ENCODE measurements at regions of chr6 and their contacts with region 1.

Region 1: DNA sequence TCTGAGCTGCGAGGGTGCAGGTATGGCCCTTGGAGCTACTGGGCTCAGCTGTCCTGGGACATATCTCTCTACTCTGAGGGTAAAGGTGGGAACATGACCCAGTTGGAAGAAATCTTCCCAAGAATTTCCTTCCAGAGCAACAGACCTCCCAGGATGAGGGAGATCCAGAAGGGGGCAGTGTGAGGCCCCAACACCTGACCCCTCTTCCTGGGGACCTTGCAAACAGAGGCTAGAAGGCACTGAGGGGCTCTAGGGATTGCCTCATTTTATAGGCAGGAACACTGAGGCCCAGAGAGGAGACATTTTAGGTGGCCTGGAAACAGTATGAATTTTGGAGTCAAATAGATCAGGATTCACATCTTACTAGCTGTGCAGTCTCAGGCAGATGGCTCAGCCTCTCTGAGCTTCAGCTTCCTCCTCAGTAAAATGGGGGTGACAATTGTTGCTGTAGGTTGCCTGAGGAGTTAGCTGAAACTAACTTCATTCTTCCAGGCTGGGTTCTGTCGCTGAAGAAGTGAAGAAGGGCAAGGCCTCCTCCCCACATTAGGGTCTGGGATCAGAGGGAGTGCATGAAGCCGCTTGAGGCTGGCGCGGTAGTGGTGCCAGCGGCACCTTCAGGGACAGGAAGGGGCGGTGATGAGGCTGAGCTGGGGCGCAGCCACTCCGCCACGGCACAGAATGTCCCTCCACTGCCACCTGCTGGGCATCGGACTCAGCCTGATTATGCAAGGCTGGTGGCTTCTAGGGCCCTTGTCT is 11.4 kb downstream of the KCNK17 start:
- DNase-seq: peak; percentile 71
- H3K4me3 ChIP-seq: no peak overlapping the region
- H3K27ac ChIP-seq: no peak overlapping the region
- H3K4me1 ChIP-seq: no peaks in the 10 kb centered on the region
- CTCF ChIP-seq: peak; percentile 79

Region 2: DNA sequence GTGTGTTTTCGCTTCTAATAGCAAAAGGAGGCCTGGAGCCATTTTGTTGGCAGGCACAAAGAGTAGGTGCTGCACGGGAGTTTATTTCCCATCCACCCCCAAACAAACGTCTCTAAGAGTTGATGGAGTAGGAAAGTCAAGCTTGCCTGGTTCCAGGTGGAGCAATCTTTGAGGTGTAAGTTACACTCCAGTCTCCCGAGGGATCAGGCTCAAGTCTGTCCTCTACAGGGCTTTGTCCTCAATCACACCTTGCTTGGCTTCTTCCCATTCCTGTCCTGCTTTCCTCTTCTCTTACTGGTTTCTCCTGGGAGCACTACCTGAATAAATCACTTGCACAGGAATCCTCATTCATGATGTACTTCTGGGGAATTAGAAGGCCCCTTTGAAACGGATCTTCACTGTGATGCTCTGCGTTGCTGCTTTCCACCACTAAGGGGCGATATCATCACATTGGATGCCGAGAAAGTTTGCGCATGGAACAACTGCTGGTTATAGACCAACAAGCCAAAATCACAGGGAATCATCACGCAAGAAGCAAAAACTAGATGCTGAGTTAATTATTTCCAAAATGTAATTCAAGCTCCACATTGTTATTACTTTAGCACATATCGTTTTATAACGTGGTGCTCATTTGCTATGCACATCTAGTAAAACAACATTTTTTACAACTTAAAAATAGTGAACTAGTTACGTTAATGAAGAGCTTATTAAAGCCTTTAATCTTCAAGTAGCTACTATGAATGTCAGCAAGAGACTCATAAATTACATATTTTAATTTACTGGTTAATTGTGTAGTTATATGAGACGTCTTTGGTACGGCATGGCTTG is 430.9 kb before region 1 on chr6:
- CTCF ChIA-PET with region 1: no interaction called
- POLR2A ChIA-PET with region 1: no interaction called
- intact Hi-C with region 1: loop called (anchors 2 kb)
- DNase-seq: peak; percentile 44
- H3K4me3 ChIP-seq: no peak overlapping the region
- H3K27ac ChIP-seq: no peak overlapping the region
- H3K4me1 ChIP-seq: no peaks in the 10 kb centered on the region
- CTCF ChIP-seq: peak; percentile 97

Region 3: DNA sequence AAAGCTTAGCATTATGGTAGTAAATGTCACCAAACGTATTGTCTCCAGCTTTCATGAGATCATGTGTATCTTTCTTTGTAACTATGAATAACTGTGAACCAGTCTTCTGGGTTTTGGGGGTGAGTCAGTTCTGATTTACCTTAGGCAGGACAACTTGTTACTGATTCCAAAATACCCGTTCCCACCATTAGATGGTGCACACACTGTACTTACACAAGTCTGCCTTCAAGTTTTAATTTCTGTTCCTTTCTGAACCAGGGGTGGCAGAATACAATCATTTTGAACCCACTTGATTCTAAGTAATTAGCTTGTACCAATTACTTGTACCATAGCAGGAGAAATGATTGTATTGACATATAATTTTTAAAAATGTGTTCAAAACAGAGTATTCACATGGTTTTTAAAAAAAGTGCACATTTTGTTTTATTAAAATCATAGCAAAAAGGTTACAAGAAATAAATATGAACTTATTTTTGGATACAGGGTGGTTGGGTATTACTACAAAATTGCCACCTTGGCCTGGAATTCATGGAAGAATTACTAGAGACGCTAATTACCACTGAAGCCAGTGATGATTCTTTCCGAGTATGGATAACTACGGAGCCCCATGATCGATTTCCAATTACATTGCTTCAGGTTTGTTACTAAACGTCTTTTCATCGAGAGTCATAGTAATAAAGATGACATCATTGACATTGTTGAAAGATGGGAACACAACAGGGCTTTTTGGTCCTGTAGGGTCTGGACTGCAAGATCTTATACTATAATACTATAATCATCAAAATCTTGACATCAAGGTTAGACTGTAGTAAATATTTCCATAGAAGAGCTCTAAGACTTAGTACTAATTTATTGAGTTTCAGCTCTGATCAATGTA is 329.4 kb before region 1 on chr6:
- CTCF ChIA-PET with region 1: no interaction called
- POLR2A ChIA-PET with region 1: no interaction called
- intact Hi-C with region 1: loop called (anchors 10 kb)
- DNase-seq: peak; percentile 52
- H3K4me3 ChIP-seq: no peak overlapping the region
- H3K27ac ChIP-seq: no peak overlapping the region
- H3K4me1 ChIP-seq: no peaks in the 10 kb centered on the region
- CTCF ChIP-seq: peak; percentile 81

Region 4: DNA sequence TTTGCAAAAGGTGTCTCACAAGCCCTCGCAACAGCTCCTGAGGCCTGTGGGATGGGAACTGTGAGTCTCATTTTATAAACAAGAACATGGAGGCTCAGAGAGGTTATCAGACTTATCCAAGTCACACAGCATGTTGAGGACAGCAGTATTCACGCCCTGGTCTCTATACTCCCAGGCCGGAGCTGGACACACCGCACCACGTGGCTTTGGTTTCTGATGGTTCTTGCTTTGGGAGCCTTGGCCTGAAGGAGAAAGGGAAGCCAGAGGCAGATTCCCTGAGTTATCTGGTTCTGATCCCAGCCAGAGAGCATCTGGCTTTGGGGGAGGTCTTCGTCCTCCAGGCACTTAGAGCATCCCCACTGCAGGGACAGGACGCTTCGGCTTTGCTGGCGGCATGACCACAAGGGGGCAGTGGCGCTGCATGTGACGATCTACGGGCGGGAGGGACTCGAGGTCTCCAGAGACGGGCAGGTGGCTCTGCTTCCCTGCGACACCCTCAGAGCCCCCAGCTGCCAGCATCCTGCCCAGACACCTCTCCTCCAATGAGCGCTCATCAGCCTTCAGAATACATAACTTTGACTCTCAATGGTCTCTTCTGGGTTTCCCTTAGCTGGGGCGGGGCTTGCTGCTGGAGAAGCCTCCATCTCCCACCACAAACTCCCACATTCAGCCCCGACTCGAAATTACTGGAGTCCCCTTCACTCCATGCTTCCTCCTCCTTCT is 136.5 kb before region 1 on chr6:
- CTCF ChIA-PET with region 1: no interaction called
- POLR2A ChIA-PET with region 1: no interaction called
- intact Hi-C with region 1: loop called (anchors 1 kb)
- DNase-seq: peak; percentile 73
- H3K4me3 ChIP-seq: no peak overlapping the region
- H3K27ac ChIP-seq: no peak overlapping the region
- H3K4me1 ChIP-seq: no peaks in the 10 kb centered on the region
- CTCF ChIP-seq: peak; percentile 85

Region 5: GRCh38 chr6:39189915-39190544 is 112.8 kb before region 1 on chr6:
- CTCF ChIA-PET with region 1: no interaction called
- POLR2A ChIA-PET with region 1: no interaction called
- intact Hi-C with region 1: loop called (anchors 1 kb)
- DNase-seq: peak; percentile 17
- H3K4me3 ChIP-seq: no peak overlapping the region
- H3K27ac ChIP-seq: no peak overlapping the region
- H3K4me1 ChIP-seq: no peaks in the 10 kb centered on the region
- CTCF ChIP-seq: peak; percentile 63